Caco-2 (cell line): ENCODE measurements at regions of chr9 and their contacts with region 1.

Region 1: GRCh38 chr9:131739980-131740648 is at the start of gene RAPGEF1:
- DNase-seq: peak; percentile 56 to 90
- H3K4me3 ChIP-seq: peak within 1 kb of the TSS; percentile 65
- H3K4me3 Mint-ChIP-seq: peak within 1 kb of the TSS; percentile 81
- H3K27ac Mint-ChIP-seq: peak within 1 kb of the TSS; percentile 74
- H3K4me1 ChIP-seq: peaks cover 39% of the 10 kb centered on the region
- H3K4me1 Mint-ChIP-seq: peaks cover 24% of the 10 kb centered on the region
- H3K27me3 ChIP-seq: no peaks in the 10 kb centered on the region
- H3K27me3 Mint-ChIP-seq: no peaks in the 10 kb centered on the region
- CTCF ChIP-seq: peak; percentile 71 to 96
- total RNA-seq, gene RAPGEF1: 71.5 and 75.4 TPM in 2 replicates

Region 2: DNA sequence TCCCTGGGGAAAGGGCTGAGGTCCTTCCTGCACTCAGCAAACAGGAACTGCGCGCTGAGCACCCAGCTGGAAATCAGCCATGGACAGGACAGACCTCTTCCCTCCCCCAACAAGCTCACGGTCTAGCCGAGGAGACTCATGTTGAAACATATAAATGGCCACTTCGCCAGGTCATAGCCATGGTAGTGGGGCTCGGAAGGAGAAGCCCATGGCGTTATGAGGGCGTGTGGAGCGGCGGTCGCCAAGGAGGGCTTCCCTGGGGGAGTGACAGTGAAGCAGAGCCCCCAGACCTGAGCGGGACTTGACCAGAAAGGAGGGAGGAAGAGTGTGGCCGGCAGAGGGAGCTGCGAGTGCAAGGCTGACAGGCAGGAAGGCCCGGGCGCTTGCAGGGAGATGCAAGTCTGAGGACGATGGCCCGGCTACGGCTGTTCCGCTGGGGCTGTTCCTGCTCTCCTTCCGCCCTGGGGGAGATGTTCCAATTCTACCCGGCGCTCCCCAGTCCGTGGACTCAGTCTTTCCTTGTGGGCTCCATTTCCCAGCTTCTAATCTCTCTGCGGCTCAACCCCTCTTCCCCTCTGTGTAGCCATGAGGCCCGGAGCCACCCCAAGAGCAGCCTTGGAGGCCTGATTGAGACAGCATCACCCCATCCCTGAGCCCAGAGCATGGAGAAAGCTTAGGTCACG is 390.1 kb before region 1 on chr9:
- CTCF ChIA-PET with region 1: no interaction called
- POLR2A ChIA-PET with region 1: no interaction called
- intact Hi-C with region 1: loop called (anchors 10 kb)
- DNase-seq: peak; percentile 86 to 88
- H3K4me3 ChIP-seq: no peak overlapping the region
- H3K4me3 Mint-ChIP-seq: peak overlapping the region; percentile 60
- H3K27ac Mint-ChIP-seq: no peak overlapping the region
- H3K4me1 ChIP-seq: peaks cover 9% of the 10 kb centered on the region
- H3K4me1 Mint-ChIP-seq: no peaks in the 10 kb centered on the region
- H3K27me3 ChIP-seq: no peaks in the 10 kb centered on the region
- H3K27me3 Mint-ChIP-seq: no peaks in the 10 kb centered on the region
- CTCF ChIP-seq: peak; percentile 68 to 86

Region 3: DNA sequence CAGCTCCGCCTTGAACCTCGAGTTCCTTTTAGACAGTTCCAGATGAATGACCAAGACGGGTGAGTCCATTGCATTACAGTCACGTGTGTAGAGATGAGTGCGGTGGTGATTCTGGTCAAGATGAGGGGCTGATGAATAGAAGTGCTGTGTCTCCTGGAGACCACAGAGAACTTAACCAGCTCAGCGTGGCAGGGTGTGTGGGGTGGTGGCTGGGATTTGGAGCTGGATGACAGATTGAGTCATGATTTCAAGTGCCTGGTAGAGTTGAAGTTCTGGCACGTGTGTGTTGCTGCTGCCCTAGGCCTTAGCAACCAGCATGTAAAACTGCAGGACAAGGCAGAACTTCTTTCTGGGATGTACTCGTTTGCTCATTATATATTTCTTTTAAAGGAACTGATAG is 293.0 kb before region 1 on chr9:
- CTCF ChIA-PET with region 1: no interaction called
- POLR2A ChIA-PET with region 1: no interaction called
- intact Hi-C with region 1: no loop called
- DNase-seq: peak in 1 of 2 experiments; percentile 8
- H3K4me3 ChIP-seq: no peak overlapping the region
- H3K4me3 Mint-ChIP-seq: no peak overlapping the region
- H3K27ac Mint-ChIP-seq: peak overlapping the region; percentile 10
- H3K4me1 ChIP-seq: no peaks in the 10 kb centered on the region
- H3K4me1 Mint-ChIP-seq: no peaks in the 10 kb centered on the region
- H3K27me3 ChIP-seq: no peaks in the 10 kb centered on the region
- H3K27me3 Mint-ChIP-seq: no peaks in the 10 kb centered on the region
- CTCF ChIP-seq: no peak

Region 4: GRCh38 chr9:131590908-131591844 is 148.9 kb before region 1 on chr9:
- CTCF ChIA-PET with region 1: interaction called, 17 read pairs
- POLR2A ChIA-PET with region 1: no interaction called
- intact Hi-C with region 1: loop called (anchors 2 kb)
- DNase-seq: peak; percentile 80 to 85
- H3K4me3 ChIP-seq: no peak overlapping the region
- H3K4me3 Mint-ChIP-seq: no peak overlapping the region
- H3K27ac Mint-ChIP-seq: peak overlapping the region; percentile 52
- H3K4me1 ChIP-seq: no peaks in the 10 kb centered on the region
- H3K4me1 Mint-ChIP-seq: no peaks in the 10 kb centered on the region
- H3K27me3 ChIP-seq: no peaks in the 10 kb centered on the region
- H3K27me3 Mint-ChIP-seq: no peaks in the 10 kb centered on the region
- CTCF ChIP-seq: peak; percentile 90 to 93

Region 5: DNA sequence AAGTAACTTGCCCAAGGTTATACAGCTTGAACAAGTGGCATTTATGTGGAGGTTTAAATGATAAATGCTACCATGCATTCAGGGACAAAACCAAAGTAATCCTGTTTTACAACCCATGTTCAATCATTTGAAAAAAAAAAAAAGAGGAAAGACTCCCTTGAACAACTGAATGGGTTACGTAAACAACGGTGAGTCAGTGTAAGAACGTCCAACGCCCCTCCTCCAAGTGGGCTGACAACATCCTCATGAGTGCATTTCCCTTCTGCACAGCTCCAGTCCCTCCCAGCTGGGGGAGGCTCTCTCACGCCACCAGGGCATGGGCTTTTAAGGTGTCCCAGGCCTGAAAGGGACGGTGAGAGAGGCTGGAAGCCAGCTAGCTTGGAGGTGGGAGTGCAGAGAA is 104.8 kb before region 1 on chr9:
- CTCF ChIA-PET with region 1: no interaction called
- POLR2A ChIA-PET with region 1: interaction called, 5 read pairs
- intact Hi-C with region 1: loop called (anchors 5 kb)
- DNase-seq: peak; percentile 88 to 91
- H3K4me3 ChIP-seq: no peak overlapping the region
- H3K4me3 Mint-ChIP-seq: peak overlapping the region; percentile 11
- H3K27ac Mint-ChIP-seq: peak overlapping the region; percentile 69
- H3K4me1 ChIP-seq: peaks cover 15% of the 10 kb centered on the region
- H3K4me1 Mint-ChIP-seq: no peaks in the 10 kb centered on the region
- H3K27me3 ChIP-seq: no peaks in the 10 kb centered on the region
- H3K27me3 Mint-ChIP-seq: no peaks in the 10 kb centered on the region
- CTCF ChIP-seq: peak in 1 of 2 experiments; percentile 22

Region 6: DNA sequence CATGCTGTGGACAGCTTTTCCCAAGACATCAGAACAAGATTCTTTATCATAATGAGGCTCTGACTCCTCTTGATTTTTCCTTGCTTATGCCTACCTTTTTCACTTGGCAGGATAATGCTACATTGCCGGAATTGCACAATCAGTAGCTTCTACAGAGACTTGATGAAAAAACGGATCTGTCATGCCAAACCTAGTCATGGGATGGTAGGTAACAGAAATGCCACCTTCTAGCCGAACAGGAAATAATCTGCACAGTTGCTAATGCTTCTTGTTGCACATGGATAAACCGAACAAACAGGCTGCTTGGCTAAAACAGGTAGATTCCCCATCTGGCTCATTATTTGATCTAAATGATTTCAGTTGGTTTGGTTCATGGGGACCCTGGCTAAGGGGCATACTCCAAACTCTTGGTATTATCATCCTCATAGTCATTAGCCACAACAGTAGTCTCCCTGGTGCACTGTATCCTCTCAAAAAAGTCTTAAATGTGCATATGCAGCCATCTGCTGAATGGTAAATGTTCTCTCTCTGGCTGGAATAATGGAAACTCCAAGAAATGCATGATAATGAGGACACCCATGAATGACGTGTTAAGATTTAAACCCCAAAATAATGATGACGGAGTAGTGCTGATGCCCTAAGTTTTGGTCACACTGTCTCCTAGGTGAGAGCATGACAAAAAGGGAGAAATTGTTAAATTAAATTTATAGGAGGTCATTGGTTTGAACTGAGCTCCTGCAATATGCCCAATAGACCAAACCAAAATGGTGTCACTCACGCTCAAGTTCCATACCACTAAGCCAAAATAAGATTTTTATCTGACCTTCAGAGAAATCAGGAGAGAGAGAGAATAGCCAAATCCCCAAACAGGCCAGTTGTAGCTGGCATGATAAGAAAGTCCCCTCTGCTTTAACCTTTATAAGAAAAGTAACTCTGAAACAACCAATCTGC is 47.2 kb before region 1 on chr9:
- CTCF ChIA-PET with region 1: interaction called, 3 read pairs
- POLR2A ChIA-PET with region 1: no interaction called
- intact Hi-C with region 1: loop called (anchors 5 kb)
- DNase-seq: no peak
- H3K4me3 ChIP-seq: no peak overlapping the region
- H3K4me3 Mint-ChIP-seq: peak overlapping the region; percentile 11
- H3K27ac Mint-ChIP-seq: peak overlapping the region; percentile 39
- H3K4me1 ChIP-seq: peaks cover 37% of the 10 kb centered on the region
- H3K4me1 Mint-ChIP-seq: peaks cover 37% of the 10 kb centered on the region
- H3K27me3 ChIP-seq: no peaks in the 10 kb centered on the region
- H3K27me3 Mint-ChIP-seq: no peaks in the 10 kb centered on the region
- CTCF ChIP-seq: no peak

Region 7: DNA sequence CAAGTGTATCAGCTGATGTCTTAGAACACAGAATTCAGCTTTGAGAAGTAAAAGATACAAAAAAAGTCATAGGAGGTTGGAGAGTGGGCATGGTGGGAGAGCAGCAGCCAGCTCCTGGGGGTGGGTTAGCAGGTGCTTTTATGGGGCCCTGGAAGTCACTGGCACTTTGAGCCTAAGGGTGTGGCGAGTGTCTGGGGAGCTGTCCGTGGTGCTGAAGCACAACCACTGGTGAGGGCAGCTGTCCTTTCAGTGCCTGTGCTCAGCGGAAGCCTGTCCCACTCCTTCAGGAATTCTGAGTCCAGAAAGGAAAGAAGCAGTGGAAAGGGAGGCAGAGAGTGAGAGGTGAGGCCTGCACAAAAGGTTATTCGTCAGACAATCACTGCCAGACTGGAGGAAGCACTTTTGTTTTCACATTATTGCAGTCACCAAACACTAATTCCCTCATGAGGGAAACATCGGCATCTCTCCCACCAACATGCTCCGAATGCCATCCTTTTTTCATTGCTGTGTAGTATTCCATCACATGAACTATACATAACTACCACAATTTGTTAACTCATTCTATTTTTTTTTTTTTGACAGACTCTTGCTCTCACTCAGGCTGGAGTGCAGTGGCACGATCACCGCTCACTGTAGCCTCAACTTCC is 59.2 kb after region 1 on chr9:
- CTCF ChIA-PET with region 1: no interaction called
- POLR2A ChIA-PET with region 1: no interaction called
- intact Hi-C with region 1: no loop called
- DNase-seq: peak; percentile 68 to 83
- H3K4me3 ChIP-seq: no peak overlapping the region
- H3K4me3 Mint-ChIP-seq: no peak overlapping the region
- H3K27ac Mint-ChIP-seq: no peak overlapping the region
- H3K4me1 ChIP-seq: no peaks in the 10 kb centered on the region
- H3K4me1 Mint-ChIP-seq: no peaks in the 10 kb centered on the region
- H3K27me3 ChIP-seq: no peaks in the 10 kb centered on the region; the same call in 1 of the 2 replicates
- H3K27me3 Mint-ChIP-seq: peaks cover 19% of the 10 kb centered on the region
- CTCF ChIP-seq: no peak